CD8-positive, alpha-beta memory T cell (primary cell): ENCODE measurements at regions of chr2 and their contacts with region 1.

Region 1: GRCh38 chr2:120174963-120175581 is 48.1 kb downstream of the TMEM185B start:
- DNase-seq: peak in 2 of 5 donors; percentile 44 to 49
- H3K4me3 ChIP-seq: no peak overlapping the region
- H3K4me3 Mint-ChIP-seq: no peak overlapping the region
- H3K27ac ChIP-seq: no peak overlapping the region
- H3K27ac Mint-ChIP-seq: peak overlapping the region in 6 of 8 donors; percentile 20 to 78 (median 62)
- H3K4me1 ChIP-seq: peaks cover 50% of the 10 kb centered on the region
- H3K4me1 Mint-ChIP-seq: peaks cover 39 to 49% (median 47%) of the 10 kb centered on the region in 3 donors
- H3K27me3 ChIP-seq: no peaks in the 10 kb centered on the region
- H3K27me3 Mint-ChIP-seq: no peaks in the 10 kb centered on the region

Region 2: GRCh38 chr2:119678998-119679710 is 495.9 kb before region 1 on chr2 and contains the start of gene TMEM177:
- CTCF ChIA-PET with region 1: interaction called, 11 read pairs
- POLR2A ChIA-PET with region 1: interaction called, 5 read pairs
- DNase-seq: peak; percentile 85 to 92 (median 87)
- H3K4me3 ChIP-seq: peak within 1 kb of the TSS; percentile 71
- H3K4me3 Mint-ChIP-seq: peak within 1 kb of the TSS; percentile 81 to 96 (median 91)
- H3K27ac ChIP-seq: peak within 1 kb of the TSS; percentile 55
- H3K27ac Mint-ChIP-seq: peak within 1 kb of the TSS; percentile 78 to 96 (median 90)
- H3K4me1 ChIP-seq: peaks cover 12% of the 10 kb centered on the region
- H3K4me1 Mint-ChIP-seq: peaks cover 29 to 38% (median 32%) of the 10 kb centered on the region in 3 donors
- H3K27me3 ChIP-seq: no peaks in the 10 kb centered on the region
- H3K27me3 Mint-ChIP-seq: peaks cover 0 to 6% of the 10 kb centered on the region in 2 donors
- total RNA-seq, gene TMEM177: 16.1 to 17.1 TPM

Region 3: DNA sequence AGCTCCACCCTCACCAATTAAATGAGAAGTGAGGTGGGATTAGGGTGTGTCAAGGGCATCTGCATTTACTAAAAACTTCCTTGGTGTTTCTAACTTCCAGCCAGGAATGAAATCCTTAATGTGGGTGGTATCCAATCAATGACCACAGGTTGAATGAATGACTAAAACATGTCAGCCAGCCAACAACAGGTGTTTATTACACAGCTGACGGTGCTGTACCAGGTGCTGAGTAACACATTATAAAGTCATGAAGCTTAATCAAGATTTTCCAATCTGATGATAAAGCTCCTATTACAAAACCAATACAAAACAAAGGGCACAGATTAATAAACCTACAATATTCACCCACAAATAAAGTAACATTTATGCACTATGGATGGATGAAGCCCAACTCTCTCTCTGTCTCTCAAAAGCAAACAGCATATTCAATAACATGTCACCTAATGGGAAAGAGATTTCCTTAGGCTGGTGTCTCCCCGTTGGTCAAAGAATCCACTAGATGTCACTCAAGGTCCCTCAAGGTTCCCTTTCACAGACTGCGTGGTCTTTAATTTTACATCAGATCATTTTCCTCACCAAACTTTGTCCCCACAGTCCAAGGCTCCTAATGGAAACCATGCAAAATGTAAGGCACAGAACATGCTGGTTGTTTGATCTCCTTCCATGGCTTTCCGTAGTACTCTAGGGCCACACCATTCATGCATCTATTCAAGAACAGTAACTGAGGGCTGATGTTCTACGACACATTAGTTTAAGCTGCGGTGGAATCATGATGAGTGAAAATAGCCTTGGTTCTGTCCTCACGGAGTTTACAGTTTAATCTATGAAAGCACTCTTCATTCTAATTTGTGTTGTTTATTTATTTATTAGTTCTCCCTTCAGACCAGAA is 421.8 kb before region 1 on chr2:
- CTCF ChIA-PET with region 1: interaction called, 69 read pairs
- POLR2A ChIA-PET with region 1: interaction called, 6 read pairs
- DNase-seq: peak in 2 of 5 donors; percentile 47 to 53
- H3K4me3 ChIP-seq: no peak overlapping the region
- H3K4me3 Mint-ChIP-seq: no peak overlapping the region
- H3K27ac ChIP-seq: no peak overlapping the region
- H3K27ac Mint-ChIP-seq: no peak overlapping the region
- H3K4me1 ChIP-seq: no peaks in the 10 kb centered on the region
- H3K4me1 Mint-ChIP-seq: peaks cover 4 to 10% (median 5%) of the 10 kb centered on the region in 3 donors
- H3K27me3 ChIP-seq: no peaks in the 10 kb centered on the region
- H3K27me3 Mint-ChIP-seq: peaks cover 0 to 1% of the 10 kb centered on the region in 2 donors

Region 4: DNA sequence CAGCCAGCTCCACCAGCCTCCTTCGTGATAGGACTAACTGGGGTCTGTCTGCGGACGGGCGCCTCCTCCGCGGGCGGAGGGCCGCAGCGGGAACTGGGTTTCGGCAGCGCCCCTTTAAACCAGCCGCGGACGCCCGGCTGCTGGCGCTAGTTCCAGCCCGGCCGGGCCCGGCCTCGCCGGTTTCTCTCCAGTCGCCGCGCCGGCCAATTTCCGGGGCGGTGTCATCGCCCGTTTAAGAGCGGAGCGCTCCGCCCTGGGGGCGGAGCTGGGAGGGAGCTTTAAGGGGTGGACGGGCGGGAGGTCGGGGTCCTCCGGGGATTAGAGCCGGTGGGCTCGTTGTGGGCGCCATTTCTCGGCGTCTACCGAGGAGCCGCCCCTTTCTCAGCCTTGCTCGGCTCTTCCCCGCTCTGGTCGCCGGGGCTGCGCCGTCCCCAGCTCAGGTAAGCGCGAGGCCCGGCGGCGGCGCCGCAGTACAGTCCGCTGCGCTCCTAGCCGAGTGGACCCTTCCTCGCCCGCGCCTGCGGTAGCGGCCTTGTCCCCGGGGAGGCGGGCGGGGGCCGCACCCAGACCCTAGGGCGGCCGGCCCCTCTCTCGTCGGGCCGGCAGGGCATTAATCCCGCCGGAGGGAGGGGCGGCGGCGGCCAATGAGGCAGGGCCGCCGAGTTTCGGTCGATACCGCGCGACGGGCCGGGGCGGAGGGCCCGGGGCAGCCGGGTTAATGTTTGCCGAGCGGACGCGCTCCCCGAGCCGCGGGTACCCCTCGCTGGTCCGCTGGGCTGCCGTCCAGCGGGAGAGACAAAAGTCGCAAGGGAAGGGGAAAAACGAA is 162.1 kb before region 1 on chr2 and contains the start of gene EPB41L5:
- CTCF ChIA-PET with region 1: interaction called, 10 read pairs
- POLR2A ChIA-PET with region 1: interaction called, 5 read pairs
- DNase-seq: peak; percentile 68 to 86 (median 74)
- H3K4me3 ChIP-seq: peak within 1 kb of the TSS; percentile 70
- H3K4me3 Mint-ChIP-seq: peak within 1 kb of the TSS; percentile 79 to 90 (median 85)
- H3K27ac ChIP-seq: peak within 1 kb of the TSS; percentile 54
- H3K27ac Mint-ChIP-seq: peak within 1 kb of the TSS in 7 of 8 donors; percentile 15 to 90 (median 78)
- H3K4me1 ChIP-seq: peaks cover 12% of the 10 kb centered on the region
- H3K4me1 Mint-ChIP-seq: peaks cover 22 to 37% (median 25%) of the 10 kb centered on the region in 3 donors
- H3K27me3 ChIP-seq: no peaks in the 10 kb centered on the region
- H3K27me3 Mint-ChIP-seq: peaks cover 0 to 2% of the 10 kb centered on the region in 2 donors
- total RNA-seq, gene EPB41L5: 3.3 to 4.0 TPM

Region 5: DNA sequence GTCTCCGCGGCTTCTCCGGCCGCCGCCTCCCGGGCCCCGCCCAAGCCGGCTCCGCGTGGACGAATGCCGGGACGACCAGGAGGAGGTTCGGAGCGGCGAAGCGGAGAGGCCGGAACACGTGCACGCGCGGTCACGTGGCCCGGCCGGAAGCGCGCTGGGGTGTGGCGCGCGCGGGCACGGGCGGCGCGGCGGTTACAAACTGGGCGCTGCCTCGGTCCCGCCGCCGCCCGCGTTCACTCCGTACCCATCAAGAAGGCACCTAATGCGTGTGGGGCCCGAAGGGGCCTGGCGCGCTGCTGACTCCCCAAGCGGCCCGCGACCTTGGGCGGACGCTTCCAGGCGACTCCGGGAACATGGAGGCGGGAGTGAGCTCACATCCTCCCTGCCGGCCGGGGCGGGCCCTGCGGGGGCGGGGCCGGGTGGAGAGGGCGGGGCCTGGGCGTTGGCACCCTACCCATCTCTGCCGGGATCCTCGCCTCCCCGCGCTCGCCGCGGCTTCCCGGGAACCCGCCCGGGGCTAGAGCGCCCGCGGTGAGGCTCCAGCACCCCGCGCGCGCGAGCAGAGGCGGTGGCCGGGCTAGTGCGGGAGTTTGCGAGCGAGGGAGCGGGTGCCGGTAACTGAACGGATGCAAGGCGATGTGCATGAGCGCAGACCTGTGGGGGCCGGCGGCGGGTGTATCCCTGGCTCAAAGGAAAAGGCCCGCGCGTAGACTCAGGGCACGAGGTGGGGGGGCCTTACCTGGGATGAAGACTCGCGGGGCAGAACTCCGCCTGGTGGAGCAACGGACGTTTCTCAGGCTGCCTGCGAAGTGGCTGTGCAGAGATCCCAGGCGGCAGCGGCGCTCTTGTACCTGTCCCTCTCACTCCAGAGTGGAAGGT is 48.2 kb after region 1 on chr2 and contains the start of gene TMEM185B:
- CTCF ChIA-PET with region 1: interaction called, 17 read pairs
- POLR2A ChIA-PET with region 1: interaction called, 9 read pairs
- DNase-seq: peak; percentile 87 to 92 (median 90)
- H3K4me3 ChIP-seq: peak within 1 kb of the TSS; percentile 78
- H3K4me3 Mint-ChIP-seq: peak within 1 kb of the TSS; percentile 82 to 94 (median 87)
- H3K27ac ChIP-seq: peak within 1 kb of the TSS; percentile 90
- H3K27ac Mint-ChIP-seq: peak within 1 kb of the TSS; percentile 86 to 95 (median 90)
- H3K4me1 ChIP-seq: peaks cover 35% of the 10 kb centered on the region
- H3K4me1 Mint-ChIP-seq: peaks cover 41 to 69% (median 67%) of the 10 kb centered on the region in 3 donors
- H3K27me3 ChIP-seq: no peaks in the 10 kb centered on the region
- H3K27me3 Mint-ChIP-seq: no peaks in the 10 kb centered on the region
- total RNA-seq, gene TMEM185B: 32.3 to 33.5 TPM

Region 6: GRCh38 chr2:120489023-120489422 is 314.0 kb after region 1 on chr2:
- CTCF ChIA-PET with region 1: no interaction called
- POLR2A ChIA-PET with region 1: no interaction called
- DNase-seq: no peak
- H3K4me3 ChIP-seq: no peak overlapping the region
- H3K4me3 Mint-ChIP-seq: no peak overlapping the region
- H3K27ac ChIP-seq: no peak overlapping the region
- H3K27ac Mint-ChIP-seq: no peak overlapping the region
- H3K4me1 ChIP-seq: no peaks in the 10 kb centered on the region
- H3K4me1 Mint-ChIP-seq: no peaks in the 10 kb centered on the region
- H3K27me3 ChIP-seq: no peaks in the 10 kb centered on the region
- H3K27me3 Mint-ChIP-seq: peaks cover 8 to 22% of the 10 kb centered on the region in 2 donors